ENCODE measurements at regions of chr7 and their contacts with region 1.

Region 1: GRCh38 chr7:127375631-127376030 is 16.9 kb downstream of the ZNF800 start:
- H3K4me3 ChIP-seq: no peak overlapping the region
- H3K27ac ChIP-seq: no peak overlapping the region
- H3K4me1 ChIP-seq: peaks cover 13% of the 10 kb centered on the region; the same call in 1 of the 2 replicates
- CTCF ChIP-seq: no peak

Region 2: DNA sequence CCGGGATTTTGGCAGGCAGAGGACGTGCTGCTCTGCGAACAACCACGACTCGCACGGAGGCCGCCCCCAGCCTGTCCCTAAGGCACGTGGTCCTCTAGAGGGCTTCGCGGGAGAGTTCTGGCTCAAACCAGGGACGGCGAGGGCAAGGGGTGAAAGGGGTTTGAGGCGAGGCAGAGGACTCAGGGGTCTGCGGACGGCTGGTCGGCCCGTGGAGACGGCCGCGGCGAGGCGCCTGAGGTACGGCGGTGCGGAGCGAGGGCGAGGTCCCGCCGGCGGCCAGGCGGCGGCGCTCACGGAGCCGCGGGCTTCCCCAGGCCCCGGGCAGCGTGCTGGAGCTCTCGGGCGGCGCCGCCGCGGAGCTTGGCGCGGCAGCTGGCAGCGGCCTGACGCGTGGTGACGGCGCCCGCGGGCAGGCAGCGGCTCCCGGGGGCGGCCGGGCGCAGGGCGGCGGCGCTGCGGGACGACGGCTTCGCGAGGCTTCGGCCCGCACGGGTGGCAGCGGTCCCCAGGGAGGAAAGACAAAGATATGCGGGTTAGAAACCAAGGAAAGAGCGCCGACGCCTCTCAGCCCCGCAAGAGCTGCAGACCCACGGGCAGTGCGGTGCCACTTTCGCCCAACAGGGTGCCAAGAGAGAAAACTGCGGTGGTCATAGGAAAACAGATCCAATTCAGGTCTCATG is 27.9 kb before region 1 on chr7:
- CTCF ChIA-PET with region 1: interaction called, 12 read pairs
- POLR2A ChIA-PET with region 1: no interaction called
- H3K4me3 ChIP-seq: peak overlapping the region; percentile 31
- H3K27ac ChIP-seq: no peak overlapping the region
- H3K4me1 ChIP-seq: no peaks in the 10 kb centered on the region
- CTCF ChIP-seq: peak; percentile 5; the same call in 1 of the 2 replicates

Region 3: GRCh38 chr7:127392566-127393367 is 17.1 kb after region 1 on chr7 and contains the start of gene ZNF800:
- CTCF ChIA-PET with region 1: interaction called, 3 read pairs
- POLR2A ChIA-PET with region 1: interaction called, 10 read pairs
- H3K4me3 ChIP-seq: peak within 1 kb of the TSS; percentile 97
- H3K27ac ChIP-seq: peak within 1 kb of the TSS; percentile 57
- H3K4me1 ChIP-seq: peaks cover 3% of the 10 kb centered on the region; the same call in 1 of the 2 replicates
- CTCF ChIP-seq: no peak

Region 4: GRCh38 chr7:127692200-127692599 is 316.6 kb after region 1 on chr7:
- CTCF ChIA-PET with region 1: no interaction called
- POLR2A ChIA-PET with region 1: no interaction called
- H3K4me3 ChIP-seq: no peak overlapping the region
- H3K27ac ChIP-seq: no peak overlapping the region
- H3K4me1 ChIP-seq: no peaks in the 10 kb centered on the region
- CTCF ChIP-seq: no peak

Measured in HEK293 (cell line).